HepG2 (cell line): ENCODE measurements at regions of chr6 and their contacts with region 1.

Region 1: GRCh38 chr6:35583893-35584688 is 71.4 kb upstream of the TULP1 start:
- DNase-seq: peak; percentile 78
- ATAC-seq: peak; percentile 87
- H3K4me3 ChIP-seq: no peak overlapping the region
- H3K27ac ChIP-seq: no peak overlapping the region
- H3K4me1 ChIP-seq: no peaks in the 10 kb centered on the region
- H3K27me3 ChIP-seq: no peaks in the 10 kb centered on the region
- CTCF ChIP-seq: peak; percentile 91
- EP300 ChIP-seq: no peak
- POLR2A ChIP-seq: no peak
- RAD21 ChIP-seq: peak; percentile 93

Region 2: DNA sequence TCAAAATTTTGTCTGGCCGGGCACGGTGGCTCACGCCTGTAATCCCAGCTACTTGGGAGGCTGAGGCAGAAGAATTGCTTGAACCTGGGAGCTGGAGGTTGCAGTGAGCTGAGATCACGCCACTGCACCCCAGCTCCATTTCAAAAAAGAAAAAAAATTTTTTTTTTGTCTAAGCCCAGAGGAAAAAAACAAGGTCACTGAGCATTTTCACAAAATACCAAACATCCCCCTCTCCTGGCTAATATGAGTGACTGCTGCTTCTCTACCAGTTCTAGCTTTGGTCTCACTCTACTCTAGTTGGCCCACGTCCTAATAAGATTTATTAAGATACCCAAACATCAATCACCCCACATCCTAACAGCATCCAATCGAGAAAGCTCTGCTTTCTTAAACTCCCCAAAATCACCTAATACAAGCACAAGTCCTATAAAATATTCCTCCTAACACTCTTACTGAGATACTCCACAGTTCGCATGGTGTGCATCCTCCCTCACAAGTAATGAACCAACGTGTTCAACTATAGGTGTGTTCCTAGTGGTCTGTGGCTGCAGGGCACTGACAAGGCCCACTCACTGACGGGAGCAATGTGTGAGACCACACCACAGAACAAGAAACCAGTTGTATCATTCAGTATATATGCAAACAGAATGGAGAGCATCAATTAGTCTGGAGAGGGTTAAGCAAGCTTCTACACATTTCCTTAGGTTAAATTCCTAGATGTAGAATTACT is 40.4 kb after region 1 on chr6:
- CTCF ChIA-PET with region 1: interaction called, 32 read pairs
- POLR2A ChIA-PET with region 1: no interaction called
- in situ Hi-C with region 1: no loop called
- intact Hi-C with region 1: loop called (anchors 1 kb)
- DNase-seq: peak; percentile 47
- ATAC-seq: peak; percentile 86
- H3K4me3 ChIP-seq: no peak overlapping the region
- H3K27ac ChIP-seq: peak overlapping the region; percentile 30
- H3K4me1 ChIP-seq: peaks cover 13% of the 10 kb centered on the region
- H3K27me3 ChIP-seq: no peaks in the 10 kb centered on the region
- CTCF ChIP-seq: peak; percentile 57
- EP300 ChIP-seq: no peak
- POLR2A ChIP-seq: no peak
- RAD21 ChIP-seq: no peak

Region 3: GRCh38 chr6:35688581-35689322 is 104.7 kb after region 1 on chr6 and contains the start of gene FKBP5:
- CTCF ChIA-PET with region 1: interaction called, 17 read pairs
- POLR2A ChIA-PET with region 1: no interaction called
- in situ Hi-C with region 1: no loop called
- intact Hi-C with region 1: loop called (anchors 2 kb)
- DNase-seq: peak; percentile 89
- ATAC-seq: peak; percentile 95
- H3K4me3 ChIP-seq: peak within 1 kb of the TSS; percentile 63 to 96 (median 89)
- H3K27ac ChIP-seq: peak within 1 kb of the TSS; percentile 71
- H3K4me1 ChIP-seq: peaks cover 29% of the 10 kb centered on the region
- H3K27me3 ChIP-seq: no peaks in the 10 kb centered on the region; a peak in 1 of 5 replicates
- CTCF ChIP-seq: peak; percentile 25; the same call in 1 of the 2 replicates
- EP300 ChIP-seq: peak in 1 of 2 experiments; percentile 58; a peak in 1 of 4 replicates
- POLR2A ChIP-seq: peak; percentile 85 to 93
- RAD21 ChIP-seq: no peak; the same call in 1 of the 2 replicates
- total RNA-seq, gene FKBP5: 17.4 and 30.9 TPM in 2 replicates

Region 4: DNA sequence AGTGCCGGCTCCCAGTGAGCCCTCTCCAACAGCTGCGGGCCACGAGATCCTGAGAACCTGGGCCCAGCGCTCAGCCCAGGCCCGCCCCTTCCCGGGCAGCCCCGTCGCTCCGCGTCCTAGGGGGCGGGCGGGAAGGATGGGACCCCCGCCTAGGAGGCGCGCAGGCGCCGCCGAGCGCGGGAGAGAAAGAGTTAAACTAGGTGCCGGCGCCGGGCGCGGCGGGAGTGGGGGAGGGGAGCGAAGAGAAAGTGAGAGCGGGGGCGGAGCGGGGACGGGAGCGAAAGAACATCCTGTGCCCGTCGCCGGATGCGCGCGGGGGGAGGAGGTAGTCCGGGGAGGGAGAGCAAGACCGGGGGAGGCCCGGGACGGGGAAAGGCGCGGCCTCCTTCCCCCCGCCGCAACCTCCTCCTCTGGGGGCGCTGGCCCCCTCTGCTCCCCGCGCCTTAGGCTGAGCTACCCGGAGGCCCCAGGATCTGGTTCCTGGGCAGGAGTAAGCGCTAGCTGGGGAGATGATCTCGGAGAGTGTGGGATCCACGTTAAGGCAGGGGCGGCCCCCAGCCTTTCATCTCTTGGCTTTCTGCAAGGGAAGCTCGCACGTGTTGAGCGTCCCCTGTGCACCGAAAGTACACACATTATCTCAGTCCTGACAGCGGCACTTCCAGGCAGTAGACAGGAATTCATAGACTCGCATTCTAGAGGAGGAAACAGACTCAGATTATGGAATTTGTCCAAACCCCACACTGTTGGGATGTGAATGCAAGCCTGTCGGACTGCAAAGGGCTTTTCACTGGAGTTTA is 147.8 kb after region 1 on chr6:
- CTCF ChIA-PET with region 1: interaction called, 131 read pairs
- POLR2A ChIA-PET with region 1: interaction called, 5 read pairs
- in situ Hi-C with region 1: loop called (anchors 5 kb)
- intact Hi-C with region 1: loop called (anchors 1 kb)
- DNase-seq: peak; percentile 96
- ATAC-seq: peak; percentile 53
- H3K4me3 ChIP-seq: peak overlapping the region; percentile 63 to 88 (median 74)
- H3K27ac ChIP-seq: peak overlapping the region; percentile 87
- H3K4me1 ChIP-seq: peaks cover 64% of the 10 kb centered on the region
- H3K27me3 ChIP-seq: no peaks in the 10 kb centered on the region; a peak in 1 of 5 replicates
- CTCF ChIP-seq: peak; percentile 48
- EP300 ChIP-seq: peak in 1 of 2 experiments; percentile 71; a peak in 1 of 4 replicates
- POLR2A ChIP-seq: peak in 1 of 2 experiments; percentile 80; a peak in 2 of 4 replicates
- RAD21 ChIP-seq: peak; percentile 15

Region 5: GRCh38 chr6:35737413-35738211 is 153.5 kb after region 1 on chr6:
- CTCF ChIA-PET with region 1: interaction called, 131 read pairs
- POLR2A ChIA-PET with region 1: interaction called, 5 read pairs
- in situ Hi-C with region 1: loop called (anchors 5 kb)
- intact Hi-C with region 1: loop called (anchors 1 kb)
- DNase-seq: peak; percentile 87
- ATAC-seq: peak; percentile 63
- H3K4me3 ChIP-seq: peak overlapping the region in 1 of 3 experiments; percentile 30; a peak in 2 of 6 replicates
- H3K27ac ChIP-seq: no peak overlapping the region
- H3K4me1 ChIP-seq: peaks cover 79% of the 10 kb centered on the region
- H3K27me3 ChIP-seq: no peaks in the 10 kb centered on the region
- CTCF ChIP-seq: peak; percentile 89
- EP300 ChIP-seq: peak in 1 of 2 experiments; percentile 62; a peak in 1 of 4 replicates
- POLR2A ChIP-seq: no peak
- RAD21 ChIP-seq: peak; percentile 85

Region 6: GRCh38 chr6:35757456-35758123 is 173.5 kb after region 1 on chr6:
- CTCF ChIA-PET with region 1: interaction called, 10 read pairs
- POLR2A ChIA-PET with region 1: no interaction called
- in situ Hi-C with region 1: no loop called
- intact Hi-C with region 1: loop called (anchors 1 kb)
- DNase-seq: peak; percentile 75
- ATAC-seq: peak; percentile 92
- H3K4me3 ChIP-seq: no peak overlapping the region
- H3K27ac ChIP-seq: no peak overlapping the region
- H3K4me1 ChIP-seq: 0 out of 2 replicates have a peak, but pooled peaks cover 7% of the 10 kb centered on the region
- H3K27me3 ChIP-seq: peaks cover 6 to 28% of the 10 kb centered on the region in 2 experiments; a peak in 4 of 5 replicates
- CTCF ChIP-seq: peak; percentile 79
- EP300 ChIP-seq: no peak
- POLR2A ChIP-seq: no peak
- RAD21 ChIP-seq: peak; percentile 77; the same call in 1 of the 2 replicates

Region 7: DNA sequence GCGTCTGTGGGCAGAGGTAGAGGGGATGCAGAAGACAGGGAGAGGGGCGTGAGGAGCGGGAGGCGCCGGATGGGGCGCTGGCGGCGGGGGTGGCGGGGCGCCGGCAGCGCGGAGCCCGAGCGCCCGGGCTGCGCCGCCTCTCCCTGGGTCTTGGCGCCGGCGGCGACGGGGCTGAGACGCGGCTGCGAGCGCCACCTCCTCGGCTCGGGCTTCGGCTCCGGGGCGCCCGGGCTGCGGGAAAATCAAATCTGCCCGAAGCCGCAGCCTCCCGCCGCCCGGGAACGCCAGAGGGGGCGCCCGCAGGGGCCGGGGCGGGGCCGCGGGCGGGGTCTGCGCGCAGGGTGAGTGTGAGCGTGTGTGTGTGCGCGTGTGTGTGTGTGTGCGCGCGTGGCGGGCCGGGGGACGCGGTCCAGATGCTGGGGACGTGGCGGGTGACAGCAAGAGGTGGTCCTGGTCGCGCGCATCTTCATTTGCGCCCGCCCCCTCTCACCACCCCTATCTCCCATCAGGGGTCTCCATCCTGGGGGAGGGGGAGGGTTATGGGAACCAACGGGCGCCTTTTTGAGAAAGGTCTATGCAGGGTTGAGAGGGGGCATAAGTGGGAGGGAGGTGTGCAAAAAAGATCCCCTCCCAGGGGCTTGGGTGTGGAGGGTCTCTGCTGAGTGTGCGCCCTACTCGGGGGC is 1255.8 kb after region 1 on chr6:
- CTCF ChIA-PET with region 1: no interaction called
- POLR2A ChIA-PET with region 1: no interaction called
- in situ Hi-C with region 1: no loop called
- intact Hi-C with region 1: no loop called
- DNase-seq: no peak
- ATAC-seq: peak; percentile 32
- H3K4me3 ChIP-seq: peak overlapping the region; percentile 27 to 68 (median 49)
- H3K27ac ChIP-seq: no peak overlapping the region
- H3K4me1 ChIP-seq: peaks cover 51% of the 10 kb centered on the region
- H3K27me3 ChIP-seq: peaks cover 19 to 38% of the 10 kb centered on the region in 2 experiments
- CTCF ChIP-seq: peak; percentile 25; the same call in 1 of the 2 replicates
- EP300 ChIP-seq: no peak
- POLR2A ChIP-seq: no peak
- RAD21 ChIP-seq: no peak